Left cardiac atrium (tissue), 4 donors: ENCODE measurements at regions of chr3 and their contacts with region 1.

Region 1: GRCh38 chr3:100400780-100401673 is at the starts of genes LNP1 and TOMM70:
- DNase-seq: peak; percentile 99
- ATAC-seq: peak; percentile 96 to 98
- total RNA-seq, gene LNP1: 2.8 to 3.1 TPM
- total RNA-seq, gene TOMM70: 50.0 to 53.4 TPM

Region 2: DNA sequence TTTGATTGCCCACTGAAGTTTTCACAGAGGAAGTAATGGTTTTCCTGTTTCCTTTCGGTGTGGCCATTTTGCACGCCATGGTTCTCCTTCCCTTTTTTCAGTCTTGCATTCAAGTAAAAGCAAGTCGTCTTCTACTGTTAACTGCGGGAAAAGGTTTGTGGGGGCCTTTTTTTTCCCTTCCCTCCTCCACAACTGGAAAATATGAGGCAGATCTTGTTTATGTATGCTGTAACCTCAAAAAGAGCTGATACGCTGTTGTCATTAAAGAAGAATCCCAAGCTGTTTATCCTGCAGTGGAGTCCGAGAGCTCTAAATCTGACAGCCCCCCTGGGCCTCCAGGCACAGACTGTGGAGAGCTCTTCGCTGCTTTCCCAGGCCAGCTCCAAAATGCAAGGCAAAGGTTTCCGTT is 327.1 kb before region 1 on chr3:
- intact Hi-C with region 1: no loop called
- DNase-seq: no peak
- ATAC-seq: peak; percentile 62 to 63

Region 3: GRCh38 chr3:100492059-100493006 is 91.3 kb after region 1 on chr3 and contains the start of gene TMEM45A:
- intact Hi-C with region 1: loop called in 1 of 2 experiments (anchors 5 kb)
- DNase-seq: peak; percentile 97
- ATAC-seq: peak; percentile 100
- total RNA-seq, gene TMEM45A: 12.3 to 15.3 TPM